ENCODE measurements at regions of chr1 and their contacts with region 1.

Region 1: GRCh38 chr1:28736450-28737306 is at the start of gene YTHDF2:
- DNase-seq: peak; percentile 99
- ATAC-seq: peak; percentile 98
- H3K4me3 ChIP-seq: peak within 1 kb of the TSS; percentile 98
- H3K27ac ChIP-seq: peak within 1 kb of the TSS; percentile 96
- H3K4me1 ChIP-seq: peaks cover 27% of the 10 kb centered on the region
- H3K27me3 ChIP-seq: no peaks in the 10 kb centered on the region
- CTCF ChIP-seq: peak; percentile 95
- total RNA-seq, gene YTHDF2: 43.4 to 55.1 (median 49.1) TPM

Region 2: DNA sequence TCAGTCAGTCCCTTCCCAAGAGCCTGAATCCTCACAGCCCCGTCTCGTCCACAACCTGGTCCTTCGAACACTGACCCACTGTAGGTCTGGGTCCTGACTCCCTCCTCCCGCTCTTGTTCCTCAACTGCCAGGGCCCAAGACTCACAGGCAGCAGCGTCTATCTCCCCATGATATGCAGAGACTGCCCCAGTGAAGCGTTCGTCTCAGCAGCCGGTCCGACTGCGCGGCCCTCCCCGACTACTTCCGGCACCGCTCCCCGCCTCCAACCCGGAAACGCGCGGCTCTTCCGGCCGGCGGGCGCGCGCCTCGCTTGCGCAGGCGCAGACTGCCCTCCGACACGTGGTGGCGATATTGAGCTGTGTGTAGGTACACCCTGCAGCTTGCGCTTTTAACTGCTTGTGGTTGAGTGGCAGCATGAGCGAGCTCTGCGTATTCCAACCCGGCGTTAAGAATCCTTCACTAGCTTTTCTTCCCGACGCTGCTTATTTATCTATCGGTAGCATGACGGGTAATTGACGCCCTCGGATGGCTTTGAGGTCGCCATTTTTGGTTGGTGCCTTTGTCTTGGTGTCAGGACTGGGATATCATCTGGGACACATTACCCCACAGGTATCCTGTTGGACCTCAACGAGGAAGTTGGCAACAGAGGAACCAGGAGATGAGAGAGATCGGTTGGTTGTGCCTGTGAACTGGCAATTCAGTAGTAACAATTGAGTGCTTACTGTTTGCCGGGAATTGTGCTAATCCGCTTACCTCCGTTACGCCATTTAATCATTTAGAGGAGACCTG is 93.6 kb before region 1 on chr1 and contains the start of gene TAF12:
- intact Hi-C with region 1: loop called (anchors 2 to 5 kb)
- DNase-seq: peak; percentile 89 to 96
- ATAC-seq: peak; percentile 92 to 95 (median 94)
- H3K4me3 ChIP-seq: peak within 1 kb of the TSS; percentile 86
- H3K27ac ChIP-seq: peak within 1 kb of the TSS; percentile 93
- H3K4me1 ChIP-seq: peaks cover 41% of the 10 kb centered on the region
- H3K27me3 ChIP-seq: no peaks in the 10 kb centered on the region
- CTCF ChIP-seq: peak; percentile 22
- total RNA-seq, gene TAF12: 24.4 to 30.3 (median 27.3) TPM

Region 3: DNA sequence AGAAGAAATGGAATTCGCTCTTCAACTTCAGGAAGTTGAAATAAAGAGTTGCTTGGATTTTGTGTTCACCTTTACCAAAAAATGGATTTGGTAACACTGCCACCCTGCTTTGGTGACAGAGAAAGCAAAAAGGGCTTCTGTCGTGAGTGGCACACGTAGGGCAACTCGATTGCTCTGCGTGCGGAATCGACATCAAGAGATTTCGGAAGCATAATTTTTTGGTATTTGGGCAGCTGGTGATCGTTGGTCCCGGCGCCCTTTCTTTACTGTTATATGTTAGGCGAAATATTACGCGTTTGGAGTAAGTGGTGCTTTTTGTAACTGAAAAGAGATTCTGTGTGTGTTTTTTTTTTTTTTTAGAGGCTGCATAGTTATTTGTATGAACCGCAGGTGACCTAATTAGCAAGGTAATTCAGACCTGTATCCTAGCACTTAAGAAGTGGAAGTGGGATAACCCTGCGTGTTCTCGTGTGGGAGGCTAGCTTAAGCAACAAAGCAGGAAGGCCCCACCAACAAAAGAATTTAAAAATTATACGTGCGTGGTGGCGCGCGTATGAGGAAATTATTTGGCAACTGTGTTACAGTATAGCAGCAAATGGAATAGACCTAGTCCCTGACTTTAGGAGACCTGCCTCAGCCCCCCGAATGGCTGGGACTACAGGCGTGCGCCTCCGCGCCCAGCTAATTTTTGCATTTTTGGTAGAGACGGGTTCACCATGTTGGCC is 88.0 kb before region 1 on chr1 and contains the start of gene RNU11:
- intact Hi-C with region 1: loop called (anchors 2 to 5 kb)
- DNase-seq: peak; percentile 80 to 92
- ATAC-seq: peak; percentile 79 to 84 (median 83)
- H3K4me3 ChIP-seq: peak within 1 kb of the TSS; percentile 64
- H3K27ac ChIP-seq: peak within 1 kb of the TSS; percentile 92
- H3K4me1 ChIP-seq: peaks cover 28% of the 10 kb centered on the region
- H3K27me3 ChIP-seq: no peaks in the 10 kb centered on the region
- CTCF ChIP-seq: no peak
- total RNA-seq, gene RNU11: not detected

Region 4: GRCh38 chr1:28668191-28668955 is 68.3 kb before region 1 on chr1 and contains the start of gene GMEB1:
- intact Hi-C with region 1: loop called in 1 of 2 experiments (anchors 10 kb)
- DNase-seq: peak; percentile 87 to 95
- ATAC-seq: peak; percentile 91 to 95 (median 94)
- H3K4me3 ChIP-seq: peak within 1 kb of the TSS; percentile 82
- H3K27ac ChIP-seq: peak within 1 kb of the TSS; percentile 99
- H3K4me1 ChIP-seq: peaks cover 5% of the 10 kb centered on the region
- H3K27me3 ChIP-seq: no peaks in the 10 kb centered on the region
- CTCF ChIP-seq: no peak
- total RNA-seq, gene GMEB1: 8.4 to 12.8 (median 10.0) TPM

Region 5: GRCh38 chr1:28971980-28972771 is 235.5 kb after region 1 on chr1:
- intact Hi-C with region 1: no loop called
- DNase-seq: no peak
- ATAC-seq: peak in 1 of 4 donors; percentile 33
- H3K4me3 ChIP-seq: no peak overlapping the region
- H3K27ac ChIP-seq: no peak overlapping the region
- H3K4me1 ChIP-seq: no peaks in the 10 kb centered on the region
- H3K27me3 ChIP-seq: no peaks in the 10 kb centered on the region
- CTCF ChIP-seq: no peak

Measured in psoas muscle (tissue), 8 donors.